ENCODE measurements at regions of chr15 and their contacts with region 1.

Region 1: DNA sequence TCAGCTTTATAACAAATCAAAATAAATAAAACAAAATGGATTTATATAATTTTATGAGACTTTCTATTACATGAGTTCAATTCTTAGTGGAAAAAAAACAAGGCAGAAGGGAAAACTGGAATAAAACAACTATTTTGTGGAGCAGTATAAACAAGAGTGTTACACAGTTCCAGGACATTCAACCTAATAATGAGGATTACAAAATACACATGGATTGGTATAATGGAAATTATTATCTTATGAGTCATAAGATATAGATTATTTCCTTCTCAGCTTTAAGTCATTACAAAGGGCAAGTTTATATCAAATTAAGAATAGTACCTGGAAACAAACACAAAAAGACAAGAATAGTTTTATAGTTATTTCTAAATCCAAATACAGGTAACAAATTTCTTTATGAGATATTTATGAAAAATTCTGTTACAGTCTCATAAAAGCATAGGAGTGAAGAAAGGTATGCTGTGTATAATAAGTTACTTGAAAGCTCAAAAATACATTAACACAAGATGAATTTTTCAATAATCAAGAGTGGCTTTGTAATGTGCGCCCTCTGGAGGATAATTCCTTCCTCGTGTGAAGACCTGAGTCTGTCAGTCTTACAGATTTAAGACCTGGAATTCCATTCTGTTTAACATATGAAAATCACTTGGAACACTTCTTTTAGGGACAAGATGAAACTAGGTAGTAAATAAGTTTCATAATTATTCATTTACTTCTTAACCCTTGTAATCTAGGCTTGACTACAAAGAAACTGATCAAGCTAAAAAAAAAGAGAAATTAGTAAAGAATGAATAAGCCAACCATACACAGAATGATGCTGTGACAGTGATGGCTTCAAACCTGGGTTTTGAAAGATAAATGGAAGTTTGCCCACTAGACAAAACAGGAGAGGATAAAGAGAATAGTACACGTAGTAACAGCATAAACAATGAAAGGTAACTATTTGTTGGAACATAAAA is 9.5 kb downstream of the COPS2 start:
- DNase-seq: no peak
- H3K4me3 ChIP-seq: no peak overlapping the region
- CTCF ChIP-seq: peak; percentile 61

Region 2: GRCh38 chr15:48759921-48760320 is 386.0 kb before region 1 on chr15:
- CTCF ChIA-PET with region 1: no interaction called
- POLR2A ChIA-PET with region 1: no interaction called
- DNase-seq: no peak
- H3K4me3 ChIP-seq: no peak overlapping the region
- CTCF ChIP-seq: no peak

Region 3: DNA sequence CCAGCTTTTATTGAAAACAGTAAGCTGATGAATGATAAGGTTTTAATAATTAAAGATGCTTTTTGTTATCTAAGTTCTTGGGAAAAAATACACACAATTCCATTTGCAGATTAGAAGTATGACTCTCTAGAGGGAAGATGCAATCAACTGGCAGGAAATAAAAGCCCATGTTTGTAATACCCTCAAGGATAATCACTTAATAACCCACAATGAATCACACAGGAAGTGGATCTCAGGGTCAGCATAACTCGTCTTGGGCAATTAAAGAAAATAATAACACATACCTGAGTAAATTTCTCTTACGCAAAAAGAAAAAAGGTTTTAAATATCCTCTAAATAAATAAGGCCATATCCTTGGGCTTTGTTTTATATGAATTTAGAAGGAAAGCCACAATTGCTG is 277.4 kb before region 1 on chr15:
- CTCF ChIA-PET with region 1: interaction called, 34 read pairs
- POLR2A ChIA-PET with region 1: no interaction called
- DNase-seq: peak; percentile 54
- H3K4me3 ChIP-seq: no peak overlapping the region
- CTCF ChIP-seq: no peak

Region 4: GRCh38 chr15:49135893-49136292 is 10.0 kb before region 1 on chr15:
- CTCF ChIA-PET with region 1: interaction called, 27 read pairs
- POLR2A ChIA-PET with region 1: interaction called, 3 read pairs
- DNase-seq: peak; percentile 42
- H3K4me3 ChIP-seq: no peak overlapping the region
- CTCF ChIP-seq: no peak